Activated CD8-positive, alpha-beta memory T cell treated with anti-CD3 and anti-CD28 coated beads, Interleukin-2, amount 10 ng/mL, durations not matched to agents 7 days and 5 days (primary cell): ENCODE measurements at regions of chr5 and their contacts with region 1.

Region 1: GRCh38 chr5:76771705-76772405 is 47.0 kb upstream of the F2RL1 start:
- DNase-seq: no peak
- ATAC-seq: no peak
- H3K4me3 Mint-ChIP-seq: no peak overlapping the region
- H3K27ac Mint-ChIP-seq: no peak overlapping the region
- H3K4me1 Mint-ChIP-seq: peaks cover 6% of the 10 kb centered on the region
- H3K27me3 Mint-ChIP-seq: no peaks in the 10 kb centered on the region

Region 2: GRCh38 chr5:76582230-76583162 is 189.4 kb before region 1 on chr5:
- CTCF ChIA-PET with region 1: interaction called, 12 read pairs
- DNase-seq: no peak
- ATAC-seq: peak; percentile 45
- H3K4me3 Mint-ChIP-seq: no peak overlapping the region
- H3K27ac Mint-ChIP-seq: no peak overlapping the region
- H3K4me1 Mint-ChIP-seq: peaks cover 17% of the 10 kb centered on the region
- H3K27me3 Mint-ChIP-seq: no peaks in the 10 kb centered on the region

Region 3: GRCh38 chr5:76601470-76601869 is 170.4 kb before region 1 on chr5:
- CTCF ChIA-PET with region 1: interaction called, 124 read pairs
- DNase-seq: no peak
- ATAC-seq: peak; percentile 58
- H3K4me3 Mint-ChIP-seq: no peak overlapping the region
- H3K27ac Mint-ChIP-seq: no peak overlapping the region
- H3K4me1 Mint-ChIP-seq: peaks cover 3% of the 10 kb centered on the region
- H3K27me3 Mint-ChIP-seq: no peaks in the 10 kb centered on the region

Region 4: GRCh38 chr5:76691467-76692138 is 80.3 kb before region 1 on chr5:
- CTCF ChIA-PET with region 1: interaction called, 18 read pairs
- DNase-seq: no peak
- ATAC-seq: peak; percentile 87
- H3K4me3 Mint-ChIP-seq: peak overlapping the region; percentile 56
- H3K27ac Mint-ChIP-seq: peak overlapping the region; percentile 79
- H3K4me1 Mint-ChIP-seq: peaks cover 34% of the 10 kb centered on the region
- H3K27me3 Mint-ChIP-seq: no peaks in the 10 kb centered on the region

Region 5: DNA sequence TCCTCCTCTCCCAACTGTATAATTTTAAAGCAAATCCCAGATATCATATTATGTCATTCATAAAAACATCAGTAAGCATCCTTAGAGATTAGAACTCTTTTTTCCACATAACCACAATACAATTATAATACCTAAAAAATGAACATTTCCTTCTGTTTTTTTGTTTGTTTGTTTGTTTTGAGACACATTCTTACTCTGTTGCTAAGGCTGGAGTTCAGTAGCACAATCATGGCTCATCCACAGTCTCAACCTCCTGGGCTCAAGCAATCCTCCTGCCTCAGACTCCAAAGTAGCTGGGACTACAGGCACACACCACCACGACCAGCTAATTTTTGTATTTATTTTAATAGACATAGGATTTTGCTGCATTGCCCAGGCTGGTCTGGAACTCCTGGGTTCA is 47.9 kb before region 1 on chr5:
- CTCF ChIA-PET with region 1: interaction called, 11 read pairs
- DNase-seq: no peak
- ATAC-seq: no peak
- H3K4me3 Mint-ChIP-seq: no peak overlapping the region
- H3K27ac Mint-ChIP-seq: no peak overlapping the region
- H3K4me1 Mint-ChIP-seq: peaks cover 38% of the 10 kb centered on the region
- H3K27me3 Mint-ChIP-seq: no peaks in the 10 kb centered on the region

Region 6: GRCh38 chr5:76745670-76746069 is 26.2 kb before region 1 on chr5:
- CTCF ChIA-PET with region 1: interaction called, 67 read pairs
- DNase-seq: peak; percentile 22
- ATAC-seq: no peak
- H3K4me3 Mint-ChIP-seq: no peak overlapping the region
- H3K27ac Mint-ChIP-seq: no peak overlapping the region
- H3K4me1 Mint-ChIP-seq: peaks cover 16% of the 10 kb centered on the region
- H3K27me3 Mint-ChIP-seq: no peaks in the 10 kb centered on the region